Gastrocnemius medialis (tissue), 4 donors: ENCODE measurements at regions of chr5 and their contacts with region 1.

Region 1: DNA sequence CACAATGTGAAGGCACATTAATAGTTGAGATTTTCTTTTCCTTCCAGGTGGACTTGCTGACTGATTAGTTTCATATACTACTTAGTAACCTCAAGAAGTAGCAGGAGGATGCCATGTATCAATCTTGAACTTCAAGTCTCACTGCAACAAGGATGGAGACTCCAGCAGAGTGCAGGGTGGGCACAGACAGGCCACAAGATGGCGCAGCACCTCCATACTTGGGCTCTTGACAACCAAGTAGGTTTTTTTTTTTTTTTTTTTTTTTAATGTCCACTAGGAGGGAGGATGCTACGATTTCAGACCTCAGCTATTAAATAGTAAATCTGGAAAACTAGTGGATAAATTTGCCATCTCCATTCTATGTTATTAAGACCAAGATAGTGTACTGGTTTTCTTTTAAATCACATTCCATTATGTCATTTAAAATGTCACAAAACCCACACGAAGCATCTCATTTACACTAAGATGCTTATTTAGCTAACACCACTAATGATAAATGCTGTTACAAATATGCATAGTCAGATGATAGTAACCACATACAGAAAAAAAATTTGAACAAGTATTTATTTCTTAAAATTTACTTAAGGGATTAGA is 58.6 kb downstream of the IL6ST start:
- DNase-seq: peak; percentile 44 to 56
- ATAC-seq: peak; percentile 32 to 37
- H3K4me3 ChIP-seq: no peak overlapping the region
- H3K27ac ChIP-seq: no peak overlapping the region
- H3K4me1 ChIP-seq: no peaks in the 10 kb centered on the region
- H3K27me3 ChIP-seq: no peaks in the 10 kb centered on the region
- CTCF ChIP-seq: peak; percentile 51 to 85 (median 77)
- POLR2A ChIP-seq: no peak

Region 2: GRCh38 chr5:55982957-55983381 is 46.8 kb after region 1 on chr5:
- in situ Hi-C with region 1: no loop called
- intact Hi-C with region 1: loop called (anchors 5 kb)
- DNase-seq: no peak
- ATAC-seq: no peak
- H3K4me3 ChIP-seq: no peak overlapping the region
- H3K27ac ChIP-seq: peak overlapping the region; percentile 2 to 52 (median 46)
- H3K4me1 ChIP-seq: peaks cover 37 to 38% of the 10 kb centered on the region in 2 donors
- H3K27me3 ChIP-seq: no peaks in the 10 kb centered on the region
- CTCF ChIP-seq: peak in 1 of 5 experiments; percentile 28
- POLR2A ChIP-seq: no peak

Region 3: GRCh38 chr5:55994574-55995333 is 58.6 kb after region 1 on chr5 and contains the start of gene IL6ST:
- in situ Hi-C with region 1: no loop called
- intact Hi-C with region 1: no loop called
- DNase-seq: peak; percentile 96 to 97
- ATAC-seq: peak; percentile 84 to 87
- H3K4me3 ChIP-seq: peak within 1 kb of the TSS; percentile 82 to 95 (median 84)
- H3K27ac ChIP-seq: peak within 1 kb of the TSS; percentile 95 to 99 (median 98)
- H3K4me1 ChIP-seq: peaks cover 35 to 36% of the 10 kb centered on the region in 2 donors
- H3K27me3 ChIP-seq: no peaks in the 10 kb centered on the region
- CTCF ChIP-seq: peak in 1 of 5 experiments; percentile 17
- POLR2A ChIP-seq: peak; percentile 96 to 98
- total RNA-seq, gene IL6ST: 128 to 228 (median 167) TPM

Region 4: GRCh38 chr5:56050551-56051255 is 114.5 kb after region 1 on chr5:
- in situ Hi-C with region 1: no loop called
- intact Hi-C with region 1: no loop called
- DNase-seq: no peak
- ATAC-seq: peak; percentile 60
- H3K4me3 ChIP-seq: no peak overlapping the region
- H3K27ac ChIP-seq: peak overlapping the region in 3 of 4 donors; percentile 10 to 64 (median 23)
- H3K4me1 ChIP-seq: no peaks in the 10 kb centered on the region
- H3K27me3 ChIP-seq: no peaks in the 10 kb centered on the region
- CTCF ChIP-seq: no peak
- POLR2A ChIP-seq: no peak

Region 5: GRCh38 chr5:56070851-56071465 is 134.8 kb after region 1 on chr5:
- in situ Hi-C with region 1: no loop called
- intact Hi-C with region 1: no loop called
- DNase-seq: no peak
- ATAC-seq: peak in 1 of 2 donors; percentile 37
- H3K4me3 ChIP-seq: no peak overlapping the region
- H3K27ac ChIP-seq: peak overlapping the region; percentile 32 to 47 (median 39)
- H3K4me1 ChIP-seq: peaks cover 0 to 9% of the 10 kb centered on the region in 2 donors
- H3K27me3 ChIP-seq: no peaks in the 10 kb centered on the region
- CTCF ChIP-seq: no peak
- POLR2A ChIP-seq: no peak

Region 6: GRCh38 chr5:56175488-56175887 is 239.3 kb after region 1 on chr5:
- in situ Hi-C with region 1: loop called in 1 of 4 experiments (anchors 25 kb)
- intact Hi-C with region 1: no loop called
- DNase-seq: peak in 1 of 2 donors; percentile 41
- ATAC-seq: peak; percentile 61 to 85
- H3K4me3 ChIP-seq: no peak overlapping the region
- H3K27ac ChIP-seq: peak overlapping the region; percentile 26 to 56 (median 35)
- H3K4me1 ChIP-seq: peaks cover 0 to 14% of the 10 kb centered on the region in 2 donors
- H3K27me3 ChIP-seq: no peaks in the 10 kb centered on the region
- CTCF ChIP-seq: no peak
- POLR2A ChIP-seq: no peak

Region 7: GRCh38 chr5:56195016-56195415 is 258.8 kb after region 1 on chr5:
- in situ Hi-C with region 1: loop called in 3 of 4 experiments (anchors 5 to 25 kb)
- intact Hi-C with region 1: no loop called
- DNase-seq: no peak
- ATAC-seq: no peak
- H3K4me3 ChIP-seq: no peak overlapping the region
- H3K27ac ChIP-seq: no peak overlapping the region
- H3K4me1 ChIP-seq: no peaks in the 10 kb centered on the region
- H3K27me3 ChIP-seq: no peaks in the 10 kb centered on the region
- CTCF ChIP-seq: no peak
- POLR2A ChIP-seq: no peak

Region 8: DNA sequence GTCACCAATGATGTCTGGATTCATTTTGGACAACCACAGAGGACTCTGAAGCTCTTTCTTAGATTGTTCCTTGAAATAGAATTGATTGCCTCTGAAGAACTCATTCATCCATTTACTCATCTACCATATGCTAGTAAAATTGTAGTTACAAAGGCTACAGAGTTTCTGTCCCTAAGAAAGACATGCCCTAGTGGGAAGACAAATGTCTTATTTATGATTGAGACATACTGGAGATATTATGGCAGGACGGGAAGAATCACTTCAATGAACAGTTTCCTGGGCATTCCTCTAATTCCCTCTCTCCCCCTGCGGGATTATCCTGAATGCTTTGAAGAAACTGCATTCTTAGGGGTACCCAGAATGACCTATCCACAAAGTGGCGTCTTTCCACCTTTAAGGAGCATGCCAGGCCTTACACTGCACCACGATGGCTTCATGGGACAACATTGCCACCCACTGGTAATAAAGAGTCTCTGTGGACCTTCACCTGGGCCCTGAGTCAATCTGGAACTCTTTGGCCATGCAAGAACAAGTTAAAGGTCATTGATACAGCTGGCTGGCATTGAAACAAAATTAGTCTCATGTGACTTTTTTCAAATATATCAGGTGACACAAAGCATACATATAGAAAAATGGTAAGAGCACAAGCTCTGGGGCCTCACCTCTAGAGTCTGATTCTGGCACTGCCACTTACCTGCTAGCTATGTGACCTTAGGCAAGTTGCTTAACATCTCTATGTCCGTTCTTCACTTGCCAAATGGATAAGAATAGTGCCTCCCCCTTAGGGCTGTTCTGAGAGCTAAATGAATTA is 264.9 kb after region 1 on chr5:
- in situ Hi-C with region 1: loop called in 3 of 4 experiments (anchors 5 to 25 kb)
- intact Hi-C with region 1: loop called (anchors 1 kb)
- DNase-seq: peak; percentile 29 to 40
- ATAC-seq: peak; percentile 96
- H3K4me3 ChIP-seq: no peak overlapping the region
- H3K27ac ChIP-seq: no peak overlapping the region
- H3K4me1 ChIP-seq: no peaks in the 10 kb centered on the region
- H3K27me3 ChIP-seq: no peaks in the 10 kb centered on the region
- CTCF ChIP-seq: peak; percentile 61 to 80 (median 76)
- POLR2A ChIP-seq: no peak

Region 9: GRCh38 chr5:56838409-56839039 is 902.3 kb after region 1 on chr5:
- in situ Hi-C with region 1: loop called in 2 of 4 experiments (anchors 10 to 25 kb)
- intact Hi-C with region 1: loop called (anchors 5 kb)
- DNase-seq: no peak
- ATAC-seq: peak; percentile 63 to 83
- H3K4me3 ChIP-seq: peak overlapping the region in 3 of 4 donors; percentile 24 to 36 (median 33)
- H3K27ac ChIP-seq: peak overlapping the region; percentile 35 to 53 (median 45)
- H3K4me1 ChIP-seq: peaks cover 30 to 50% of the 10 kb centered on the region in 2 donors
- H3K27me3 ChIP-seq: no peaks in the 10 kb centered on the region
- CTCF ChIP-seq: peak; percentile 43 to 71 (median 58)
- POLR2A ChIP-seq: no peak